ENCODE measurements at regions of chr3 and their contacts with region 1.

Region 1: GRCh38 chr3:154095832-154096421 is 25.3 kb upstream of the ARHGEF26 start:
- DNase-seq: peak in 1 of 4 donors; percentile 36
- ATAC-seq: peak; percentile 64
- H3K4me3 ChIP-seq: no peak overlapping the region
- H3K27ac ChIP-seq: no peak overlapping the region
- H3K4me1 ChIP-seq: no peaks in the 10 kb centered on the region
- H3K27me3 ChIP-seq: no peaks in the 10 kb centered on the region
- CTCF ChIP-seq: peak; percentile 19 to 62

Region 2: GRCh38 chr3:154252759-154253638 is 157.1 kb after region 1 on chr3:
- intact Hi-C with region 1: loop called in 1 of 2 experiments (anchors 10 kb)
- DNase-seq: peak; percentile 84 to 94 (median 90)
- ATAC-seq: peak; percentile 99
- H3K4me3 ChIP-seq: no peak overlapping the region
- H3K27ac ChIP-seq: no peak overlapping the region
- H3K4me1 ChIP-seq: peaks cover 3 to 11% of the 10 kb centered on the region in 2 donors
- H3K27me3 ChIP-seq: no peaks in the 10 kb centered on the region
- CTCF ChIP-seq: peak; percentile 77 to 83

Measured in left lung (tissue), 14 donors.